ENCODE measurements at regions of chr12 and their contacts with region 1.

Region 1: GRCh38 chr12:91877022-91877421 is 268.6 kb downstream of the BTG1 start:
- DNase-seq: peak; percentile 60 to 97 (median 86)
- ATAC-seq: peak; percentile 91 to 98 (median 96)
- H3K4me3 ChIP-seq: peak overlapping the region in 1 of 2 donors; percentile 30
- H3K4me3 Mint-ChIP-seq: peak overlapping the region; percentile 69 to 84 (median 77)
- H3K27ac ChIP-seq: peak overlapping the region; percentile 97
- H3K27ac Mint-ChIP-seq: peak overlapping the region; percentile 97 to 100
- H3K4me1 ChIP-seq: peaks cover 42 to 47% of the 10 kb centered on the region in 2 experiments
- H3K4me1 Mint-ChIP-seq: peaks cover 71 to 84% (median 82%) of the 10 kb centered on the region in 3 donors
- H3K27me3 ChIP-seq: no peaks in the 10 kb centered on the region
- H3K27me3 Mint-ChIP-seq: no peaks in the 10 kb centered on the region

Region 2: GRCh38 chr12:91792597-91792996 is 84.4 kb before region 1 on chr12:
- CTCF ChIA-PET with region 1: no interaction called
- POLR2A ChIA-PET with region 1: interaction called in 1 of 2 experiments, 13 read pairs
- DNase-seq: no peak
- ATAC-seq: no peak
- H3K4me3 ChIP-seq: no peak overlapping the region
- H3K4me3 Mint-ChIP-seq: no peak overlapping the region
- H3K27ac ChIP-seq: no peak overlapping the region
- H3K27ac Mint-ChIP-seq: no peak overlapping the region
- H3K4me1 ChIP-seq: no peaks in the 10 kb centered on the region
- H3K4me1 Mint-ChIP-seq: peaks cover 3 to 17% (median 8%) of the 10 kb centered on the region in 3 donors
- H3K27me3 ChIP-seq: no peaks in the 10 kb centered on the region
- H3K27me3 Mint-ChIP-seq: no peaks in the 10 kb centered on the region

Region 3: GRCh38 chr12:92030618-92031017 is 153.6 kb after region 1 on chr12:
- CTCF ChIA-PET with region 1: interaction called, 3 to 6 read pairs
- POLR2A ChIA-PET with region 1: interaction called, 4 to 13 read pairs
- DNase-seq: peak in 34 of 35 experiments; percentile 46 to 88 (median 67)
- ATAC-seq: peak; percentile 92
- H3K4me3 ChIP-seq: peak overlapping the region in 1 of 2 donors; percentile 11
- H3K4me3 Mint-ChIP-seq: peak overlapping the region; percentile 58 to 71 (median 66)
- H3K27ac ChIP-seq: peak overlapping the region; percentile 94
- H3K27ac Mint-ChIP-seq: peak overlapping the region; percentile 97 to 98
- H3K4me1 ChIP-seq: peaks cover 60 to 62% of the 10 kb centered on the region in 2 experiments
- H3K4me1 Mint-ChIP-seq: peaks cover 87 to 91% (median 89%) of the 10 kb centered on the region in 3 donors
- H3K27me3 ChIP-seq: no peaks in the 10 kb centered on the region
- H3K27me3 Mint-ChIP-seq: no peaks in the 10 kb centered on the region

Region 4: GRCh38 chr12:92424338-92424737 is 547.3 kb after region 1 on chr12:
- CTCF ChIA-PET with region 1: no interaction called
- POLR2A ChIA-PET with region 1: interaction called in 1 of 2 experiments, 10 read pairs
- DNase-seq: no peak
- ATAC-seq: no peak
- H3K4me3 ChIP-seq: no peak overlapping the region
- H3K4me3 Mint-ChIP-seq: no peak overlapping the region
- H3K27ac ChIP-seq: no peak overlapping the region
- H3K27ac Mint-ChIP-seq: no peak overlapping the region
- H3K4me1 ChIP-seq: peaks cover 0 to 3% of the 10 kb centered on the region in 2 experiments
- H3K4me1 Mint-ChIP-seq: peaks cover 38 to 51% (median 49%) of the 10 kb centered on the region in 3 donors
- H3K27me3 ChIP-seq: no peaks in the 10 kb centered on the region
- H3K27me3 Mint-ChIP-seq: no peaks in the 10 kb centered on the region

Region 5: DNA sequence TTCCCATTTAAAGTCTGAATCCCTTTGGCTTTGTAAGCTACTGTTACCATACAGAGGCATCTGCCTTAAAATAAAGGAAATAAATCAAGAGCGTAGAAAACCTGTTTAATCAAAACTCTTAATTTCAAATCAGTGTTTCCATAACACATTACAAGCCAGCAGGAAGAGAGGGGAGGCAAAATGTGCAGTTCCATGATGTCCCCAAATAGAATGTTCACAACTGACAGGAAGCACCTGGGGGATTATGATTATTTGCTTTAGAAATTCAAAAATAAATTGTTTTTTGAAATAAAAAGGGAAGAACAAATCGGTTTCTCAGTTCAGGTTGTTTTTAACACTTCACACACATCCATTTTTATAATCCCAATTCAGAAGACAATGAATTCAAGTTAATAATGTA is 1716.8 kb after region 1 on chr12:
- CTCF ChIA-PET with region 1: no interaction called
- POLR2A ChIA-PET with region 1: no interaction called
- DNase-seq: no peak
- ATAC-seq: no peak
- H3K4me3 ChIP-seq: no peak overlapping the region
- H3K4me3 Mint-ChIP-seq: no peak overlapping the region
- H3K27ac ChIP-seq: no peak overlapping the region
- H3K27ac Mint-ChIP-seq: no peak overlapping the region
- H3K4me1 ChIP-seq: peaks cover 4 to 9% of the 10 kb centered on the region in 2 experiments
- H3K4me1 Mint-ChIP-seq: peaks cover 14 to 27% (median 24%) of the 10 kb centered on the region in 3 donors
- H3K27me3 ChIP-seq: peaks cover 0 to 20% of the 10 kb centered on the region in 2 experiments
- H3K27me3 Mint-ChIP-seq: peaks cover 52 to 59% of the 10 kb centered on the region in 2 donors

Measured in T-cell (primary cell).